Upper lobe of right lung (tissue), 1 donor: ENCODE measurements at regions of chr2 and their contacts with region 1.

Region 1: GRCh38 chr2:176126929-176127773 is 2.4 kb upstream of the HOXD8 start:
- DNase-seq: peak; percentile 63
- ATAC-seq: no peak
- H3K4me3 ChIP-seq: no peak overlapping the region
- H3K27ac ChIP-seq: no peak overlapping the region
- H3K4me1 ChIP-seq: peaks cover 12% of the 10 kb centered on the region
- H3K27me3 ChIP-seq: peaks cover 96% of the 10 kb centered on the region
- CTCF ChIP-seq: peak; percentile 92

Region 2: GRCh38 chr2:176035013-176035691 is 92.0 kb before region 1 on chr2:
- intact Hi-C with region 1: no loop called
- DNase-seq: no peak
- ATAC-seq: no peak
- H3K4me3 ChIP-seq: no peak overlapping the region
- H3K27ac ChIP-seq: no peak overlapping the region
- H3K4me1 ChIP-seq: no peaks in the 10 kb centered on the region
- H3K27me3 ChIP-seq: peaks cover 14% of the 10 kb centered on the region
- CTCF ChIP-seq: no peak

Region 3: GRCh38 chr2:176454893-176455811 is 328.0 kb after region 1 on chr2:
- intact Hi-C with region 1: loop called (anchors 10 kb)
- DNase-seq: peak; percentile 83
- ATAC-seq: peak; percentile 89
- H3K4me3 ChIP-seq: no peak overlapping the region
- H3K27ac ChIP-seq: no peak overlapping the region
- H3K4me1 ChIP-seq: no peaks in the 10 kb centered on the region
- H3K27me3 ChIP-seq: peaks cover 11% of the 10 kb centered on the region
- CTCF ChIP-seq: peak; percentile 98

Region 4: DNA sequence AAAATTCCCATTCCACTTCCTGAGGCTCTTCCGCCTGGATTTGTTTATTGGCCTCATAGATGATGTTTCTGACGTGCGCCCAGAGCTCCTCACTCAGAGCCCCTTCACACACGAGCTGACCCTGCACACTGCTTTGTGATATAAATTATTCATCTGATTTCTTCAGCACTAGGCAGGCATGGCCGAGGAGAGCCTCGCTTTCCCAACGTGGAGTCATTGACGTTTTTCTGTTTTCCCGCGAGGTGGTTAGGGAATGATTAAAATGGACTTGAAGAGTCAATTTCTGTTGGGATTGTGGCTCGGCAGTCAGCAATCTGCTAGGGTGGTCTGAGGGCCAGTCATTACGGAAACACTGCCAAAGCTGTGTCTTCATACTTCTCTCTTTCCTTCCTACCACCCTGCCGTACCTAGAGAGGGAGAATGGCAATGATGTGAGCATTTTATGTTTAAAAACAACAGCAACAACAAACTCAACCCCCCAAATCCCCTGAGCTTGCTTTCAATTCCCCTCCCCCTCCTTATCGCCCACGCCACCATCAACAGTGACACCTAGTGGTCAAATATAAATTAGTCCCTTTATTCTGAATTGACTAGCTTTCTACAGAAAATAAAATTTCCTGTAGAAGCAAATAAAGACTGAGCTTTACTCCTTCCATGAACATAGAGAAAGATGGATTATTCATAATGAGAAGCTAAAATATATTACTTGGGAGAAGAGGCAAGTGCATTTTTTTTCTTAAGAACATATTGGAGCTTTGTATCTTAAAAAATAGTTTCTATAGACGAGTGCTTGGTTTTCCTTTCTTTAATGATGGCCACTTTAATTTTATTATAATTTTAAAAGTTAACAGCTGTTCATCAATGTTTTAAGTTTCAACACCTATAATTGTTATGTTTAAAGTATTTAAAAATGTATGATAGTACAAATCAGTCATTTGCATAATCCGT is 427.2 kb after region 1 on chr2:
- intact Hi-C with region 1: loop called (anchors 10 kb)
- DNase-seq: no peak
- ATAC-seq: peak; percentile 78
- H3K4me3 ChIP-seq: peak overlapping the region; percentile 54
- H3K27ac ChIP-seq: no peak overlapping the region
- H3K4me1 ChIP-seq: peaks cover 13% of the 10 kb centered on the region
- H3K27me3 ChIP-seq: peaks cover 13% of the 10 kb centered on the region
- CTCF ChIP-seq: peak; percentile 68

Region 5: GRCh38 chr2:176638167-176639015 is 511.2 kb after region 1 on chr2:
- intact Hi-C with region 1: loop called (anchors 5 kb)
- DNase-seq: peak; percentile 79
- ATAC-seq: peak; percentile 92
- H3K4me3 ChIP-seq: peak overlapping the region; percentile 58
- H3K27ac ChIP-seq: no peak overlapping the region
- H3K4me1 ChIP-seq: peaks cover 7% of the 10 kb centered on the region
- H3K27me3 ChIP-seq: peaks cover 89% of the 10 kb centered on the region
- CTCF ChIP-seq: peak; percentile 79